ENCODE measurements at regions of chr6 and their contacts with region 1.

Region 1: GRCh38 chr6:137873273-137873762 is 6.3 kb downstream of the TNFAIP3 start:
- DNase-seq: peak; percentile 69
- H3K4me3 Mint-ChIP-seq: peak overlapping the region; percentile 98
- H3K27ac Mint-ChIP-seq: peak overlapping the region; percentile 99
- H3K4me1 Mint-ChIP-seq: peaks cover 66% of the 10 kb centered on the region
- H3K27me3 Mint-ChIP-seq: no peaks in the 10 kb centered on the region

Region 2: GRCh38 chr6:137661601-137662000 is 211.7 kb before region 1 on chr6:
- intact Hi-C with region 1: loop called (anchors 1 kb)
- DNase-seq: no peak
- H3K4me3 Mint-ChIP-seq: no peak overlapping the region
- H3K27ac Mint-ChIP-seq: no peak overlapping the region
- H3K4me1 Mint-ChIP-seq: peaks cover 58% of the 10 kb centered on the region
- H3K27me3 Mint-ChIP-seq: peaks cover 2% of the 10 kb centered on the region

Region 3: DNA sequence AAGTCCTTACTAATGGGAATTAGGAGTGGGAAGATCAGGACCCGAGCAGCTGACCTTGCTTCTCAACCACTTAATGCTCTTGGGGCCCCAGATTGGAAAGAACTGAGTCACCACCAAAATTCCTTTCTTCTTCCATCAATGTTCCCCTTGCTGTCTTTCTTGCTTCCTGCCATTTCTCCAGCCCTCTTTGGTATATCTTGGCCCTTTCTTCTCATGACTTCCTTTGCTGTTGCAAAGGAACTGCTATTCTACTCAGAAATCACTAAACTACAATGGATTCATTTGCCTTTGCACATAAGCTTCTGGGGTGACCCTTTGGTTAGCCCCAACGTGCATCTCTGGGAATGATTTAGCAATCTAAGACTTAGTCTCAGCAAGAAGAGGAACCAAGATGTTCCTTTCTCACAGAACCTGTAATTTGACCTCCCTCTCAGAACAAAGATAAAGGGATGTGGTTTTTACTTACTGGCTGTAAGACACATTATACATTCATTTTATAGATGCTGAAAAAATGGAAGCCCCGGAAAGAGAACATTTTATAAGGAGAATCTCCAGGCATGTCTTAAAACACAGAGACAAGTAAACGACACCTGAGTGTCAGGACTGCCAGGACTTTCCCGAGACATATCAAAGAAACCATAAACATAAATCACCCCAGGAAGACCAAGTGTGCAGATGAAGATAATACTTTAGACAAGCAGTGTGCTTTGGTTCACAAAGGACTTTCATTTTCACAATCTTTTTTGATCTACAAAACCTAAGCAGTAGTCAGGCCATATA is 105.2 kb before region 1 on chr6:
- intact Hi-C with region 1: no loop called
- DNase-seq: no peak
- H3K4me3 Mint-ChIP-seq: peak overlapping the region; percentile 70
- H3K27ac Mint-ChIP-seq: peak overlapping the region; percentile 93
- H3K4me1 Mint-ChIP-seq: peaks cover 26% of the 10 kb centered on the region
- H3K27me3 Mint-ChIP-seq: no peaks in the 10 kb centered on the region

Region 4: GRCh38 chr6:137791281-137792159 is 81.8 kb before region 1 on chr6:
- intact Hi-C with region 1: loop called (anchors 1 kb)
- DNase-seq: no peak
- H3K4me3 Mint-ChIP-seq: peak overlapping the region; percentile 59
- H3K27ac Mint-ChIP-seq: peak overlapping the region; percentile 87
- H3K4me1 Mint-ChIP-seq: peaks cover 76% of the 10 kb centered on the region
- H3K27me3 Mint-ChIP-seq: no peaks in the 10 kb centered on the region

Region 5: DNA sequence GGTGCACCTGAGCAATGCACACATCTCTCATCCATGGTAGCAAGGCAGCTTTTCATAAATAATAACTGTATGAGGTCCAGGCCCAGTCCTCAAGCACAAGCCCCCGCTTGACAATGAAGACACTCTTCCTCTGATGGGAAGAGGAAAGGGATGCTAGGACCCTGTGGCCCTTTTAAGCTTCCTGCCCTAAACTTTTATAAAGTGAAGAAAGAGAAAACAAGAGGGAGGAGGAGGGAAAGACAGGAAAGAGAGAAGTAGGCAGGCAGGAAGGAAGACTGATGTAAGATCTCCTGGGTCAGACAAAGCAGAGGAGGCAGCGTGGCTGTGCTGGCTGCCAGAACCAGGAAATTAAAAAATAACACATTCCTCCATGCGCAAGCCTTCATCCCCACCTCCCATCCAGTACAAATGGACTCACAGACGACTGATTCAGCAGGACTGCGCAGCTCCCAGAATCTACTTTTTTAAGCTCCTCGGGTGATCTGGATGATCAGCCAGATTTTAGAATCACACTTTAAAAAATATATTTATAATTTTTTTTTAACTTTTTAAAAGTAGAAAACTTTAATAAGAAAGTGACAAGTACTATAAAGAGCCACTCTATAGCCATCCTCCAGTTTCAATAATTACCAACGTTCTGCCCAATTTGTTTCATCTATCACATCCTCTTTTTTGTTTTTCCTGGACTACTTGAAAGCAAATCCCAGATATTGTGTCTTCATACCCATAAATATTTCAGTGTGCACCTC is 10.3 kb after region 1 on chr6:
- intact Hi-C with region 1: loop called (anchors 1 kb)
- DNase-seq: no peak
- H3K4me3 Mint-ChIP-seq: peak overlapping the region; percentile 44
- H3K27ac Mint-ChIP-seq: peak overlapping the region; percentile 95
- H3K4me1 Mint-ChIP-seq: peaks cover 49% of the 10 kb centered on the region
- H3K27me3 Mint-ChIP-seq: no peaks in the 10 kb centered on the region

Region 6: GRCh38 chr6:137927777-137928218 is 54.5 kb after region 1 on chr6:
- intact Hi-C with region 1: loop called (anchors 1 kb)
- DNase-seq: peak; percentile 80
- H3K4me3 Mint-ChIP-seq: peak overlapping the region; percentile 52
- H3K27ac Mint-ChIP-seq: peak overlapping the region; percentile 93
- H3K4me1 Mint-ChIP-seq: peaks cover 82% of the 10 kb centered on the region
- H3K27me3 Mint-ChIP-seq: no peaks in the 10 kb centered on the region

Region 7: GRCh38 chr6:137975188-137975940 is 102.0 kb after region 1 on chr6:
- intact Hi-C with region 1: loop called (anchors 1 kb)
- DNase-seq: peak; percentile 39
- H3K4me3 Mint-ChIP-seq: peak overlapping the region; percentile 69
- H3K27ac Mint-ChIP-seq: peak overlapping the region; percentile 91
- H3K4me1 Mint-ChIP-seq: peaks cover 71% of the 10 kb centered on the region
- H3K27me3 Mint-ChIP-seq: no peaks in the 10 kb centered on the region